SK-N-SH (cell line): ENCODE measurements at regions of chr7 and their contacts with region 1.

Region 1: GRCh38 chr7:38215735-38216670 is 38.0 kb downstream of the STARD3NL start:
- DNase-seq: peak; percentile 77
- H3K4me3 ChIP-seq: no peak overlapping the region
- H3K27ac ChIP-seq: peak overlapping the region; percentile 6 to 31; a peak in 2 of 4 replicates
- H3K4me1 ChIP-seq: peaks cover 9 to 18% of the 10 kb centered on the region in 2 experiments; a peak in 3 of 4 replicates
- H3K27me3 ChIP-seq: no peaks in the 10 kb centered on the region
- CTCF ChIP-seq: peak; percentile 100
- EP300 ChIP-seq: no peak; a peak in 1 of 4 replicates
- RAD21 ChIP-seq: peak; percentile 86

Region 2: GRCh38 chr7:37916673-37917660 is 299.0 kb before region 1 on chr7 and contains the start of gene SFRP4:
- CTCF ChIA-PET with region 1: interaction called, 42 read pairs
- POLR2A ChIA-PET with region 1: no interaction called
- DNase-seq: peak; percentile 77
- H3K4me3 ChIP-seq: peak within 1 kb of the TSS; percentile 51 to 54
- H3K27ac ChIP-seq: no peak within 1 kb of the TSS
- H3K4me1 ChIP-seq: peaks cover 0 to 26% of the 10 kb centered on the region in 2 experiments; a peak in 2 of 4 replicates
- H3K27me3 ChIP-seq: peaks cover 39% of the 10 kb centered on the region; the same call in 1 of the 2 replicates
- CTCF ChIP-seq: peak; percentile 82
- EP300 ChIP-seq: no peak
- RAD21 ChIP-seq: peak; percentile 69
- polyA plus RNA-seq, gene SFRP4: 0.03 TPM in 1 of 2 replicates, not detected in the other

Region 3: DNA sequence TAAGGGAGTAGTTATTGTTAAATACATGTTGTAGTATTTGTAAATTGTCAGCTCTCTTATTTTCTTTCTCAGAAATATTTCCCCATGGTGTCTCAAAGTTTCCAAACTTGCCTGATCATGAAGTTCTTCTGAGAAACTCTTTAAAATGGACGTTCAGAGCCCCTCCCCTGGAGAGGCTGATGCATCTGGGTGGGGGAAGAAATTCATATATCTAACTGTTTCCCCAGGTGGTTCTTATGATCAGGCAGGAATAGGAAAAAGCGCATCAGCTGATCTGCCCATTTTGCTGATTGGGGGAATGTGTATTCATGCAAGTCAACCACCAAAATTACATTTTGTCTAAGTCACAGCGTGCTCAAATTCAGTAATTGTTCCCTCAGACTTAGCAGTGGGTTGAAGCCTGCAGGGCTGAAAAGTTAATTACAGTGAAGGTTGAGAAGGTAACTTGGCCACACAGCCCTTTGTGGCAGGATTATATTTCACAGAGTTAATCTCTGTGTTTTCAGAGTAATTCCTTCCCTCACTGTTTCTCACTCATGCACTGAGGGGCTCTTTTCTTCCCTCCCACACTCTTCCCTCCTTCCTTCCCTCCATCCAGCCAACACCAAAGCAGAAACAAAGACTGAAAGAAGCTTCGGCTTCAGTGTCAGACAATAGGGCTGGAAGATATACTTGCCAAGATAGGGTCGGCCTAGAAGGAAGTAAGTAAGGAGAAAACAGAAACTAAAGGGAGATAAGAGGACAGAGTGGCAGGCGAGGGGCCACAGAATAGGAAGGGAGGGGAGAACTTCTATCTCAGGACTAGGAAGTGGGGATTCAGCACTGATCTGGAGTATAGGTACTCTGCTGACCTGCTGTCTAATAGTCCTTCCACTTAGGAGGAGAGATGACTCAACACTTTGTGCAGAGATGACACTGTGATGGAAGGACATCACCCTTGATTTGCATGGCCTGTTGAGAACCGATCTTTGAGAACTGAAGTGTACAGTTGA is 88.5 kb before region 1 on chr7:
- CTCF ChIA-PET with region 1: interaction called, 11 read pairs
- POLR2A ChIA-PET with region 1: no interaction called
- DNase-seq: no peak
- H3K4me3 ChIP-seq: no peak overlapping the region
- H3K27ac ChIP-seq: no peak overlapping the region
- H3K4me1 ChIP-seq: no peaks in the 10 kb centered on the region
- H3K27me3 ChIP-seq: no peaks in the 10 kb centered on the region; the same call in 1 of the 2 replicates
- CTCF ChIP-seq: no peak
- EP300 ChIP-seq: no peak
- RAD21 ChIP-seq: no peak

Region 4: GRCh38 chr7:38195804-38196595 is 20.0 kb before region 1 on chr7:
- CTCF ChIA-PET with region 1: interaction called, 98 read pairs
- POLR2A ChIA-PET with region 1: no interaction called
- DNase-seq: no peak
- H3K4me3 ChIP-seq: no peak overlapping the region
- H3K27ac ChIP-seq: peak overlapping the region in 1 of 2 experiments; percentile 45; a peak in 2 of 4 replicates
- H3K4me1 ChIP-seq: peaks cover 22 to 40% of the 10 kb centered on the region in 2 experiments; a peak in 3 of 4 replicates
- H3K27me3 ChIP-seq: no peaks in the 10 kb centered on the region
- CTCF ChIP-seq: no peak
- EP300 ChIP-seq: no peak
- RAD21 ChIP-seq: no peak

Region 5: DNA sequence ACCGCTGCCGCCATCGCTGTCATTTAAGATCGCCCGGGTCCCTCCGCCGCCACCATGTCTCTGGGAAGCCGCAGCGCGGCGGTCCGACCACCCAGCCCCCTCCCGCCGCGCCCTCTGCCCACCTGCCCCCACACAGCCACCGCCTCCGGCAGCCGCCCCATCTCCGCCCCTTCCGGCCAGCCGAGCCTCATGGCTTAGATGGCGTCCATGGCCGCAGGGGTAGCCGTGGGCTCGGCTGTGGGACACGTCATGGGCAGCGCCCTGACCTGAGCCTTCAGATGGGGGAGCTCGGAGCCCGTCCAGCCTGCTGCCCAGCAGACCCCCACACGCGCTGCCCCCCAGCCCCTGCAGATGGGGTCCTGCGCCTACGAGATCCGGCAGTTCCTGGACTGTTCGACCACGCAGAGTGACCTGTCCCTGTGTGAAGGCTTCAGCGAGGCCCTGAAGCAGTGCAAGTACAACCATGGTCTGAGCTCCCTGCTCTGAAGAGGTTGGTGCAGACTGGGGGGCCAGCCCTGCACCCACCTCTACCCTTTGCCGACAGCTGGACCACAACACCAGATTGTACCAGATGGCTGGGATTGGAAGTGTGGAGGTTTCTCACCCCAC is 95.4 kb after region 1 on chr7:
- CTCF ChIA-PET with region 1: interaction called, 59 read pairs
- POLR2A ChIA-PET with region 1: no interaction called
- DNase-seq: peak; percentile 65
- H3K4me3 ChIP-seq: no peak overlapping the region
- H3K27ac ChIP-seq: no peak overlapping the region
- H3K4me1 ChIP-seq: peaks cover 0 to 11% of the 10 kb centered on the region in 2 experiments; a peak in 3 of 4 replicates
- H3K27me3 ChIP-seq: no peaks in the 10 kb centered on the region; the same call in 1 of the 2 replicates
- CTCF ChIP-seq: no peak
- EP300 ChIP-seq: no peak
- RAD21 ChIP-seq: no peak

Region 6: DNA sequence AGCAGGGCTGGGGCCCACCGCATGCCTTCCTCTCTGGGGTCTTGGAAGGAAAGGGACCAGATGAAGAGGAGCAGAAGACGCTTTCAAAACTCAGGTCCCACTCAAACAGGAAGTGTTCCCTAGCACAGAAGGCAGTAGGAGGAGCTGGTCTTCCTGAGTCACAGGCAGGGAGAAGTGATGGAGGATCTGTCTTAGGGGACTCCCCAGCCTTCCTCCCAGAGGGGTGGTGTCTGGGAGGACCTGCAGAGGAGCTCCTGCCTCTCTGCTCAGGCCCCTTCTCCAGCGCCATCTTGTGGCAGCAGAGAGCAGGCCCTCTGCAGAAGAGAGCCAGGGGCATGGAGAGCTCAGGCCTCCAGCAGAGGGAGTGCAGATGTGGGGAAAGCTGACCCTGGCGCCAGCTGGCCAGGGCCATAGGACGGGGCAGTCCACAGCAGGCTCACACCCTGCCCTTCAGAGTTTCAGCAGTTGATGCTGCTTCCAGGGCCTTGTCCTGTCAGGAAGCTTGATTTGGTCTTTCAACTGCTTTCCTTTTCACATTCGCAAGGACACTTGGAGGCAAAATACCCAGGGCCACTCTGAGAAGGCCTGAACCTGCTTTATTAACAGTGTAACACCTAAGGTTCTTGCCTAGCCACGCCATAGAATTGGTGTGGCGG is 119.6 kb after region 1 on chr7:
- CTCF ChIA-PET with region 1: interaction called, 58 read pairs
- POLR2A ChIA-PET with region 1: no interaction called
- DNase-seq: peak; percentile 79
- H3K4me3 ChIP-seq: peak overlapping the region in 1 of 2 experiments; percentile 25; a peak in 1 of 4 replicates
- H3K27ac ChIP-seq: no peak overlapping the region
- H3K4me1 ChIP-seq: peaks cover 0 to 2% of the 10 kb centered on the region in 2 experiments; a peak in 1 of 4 replicates
- H3K27me3 ChIP-seq: no peaks in the 10 kb centered on the region
- CTCF ChIP-seq: peak; percentile 94
- EP300 ChIP-seq: no peak
- RAD21 ChIP-seq: peak; percentile 72

Region 7: DNA sequence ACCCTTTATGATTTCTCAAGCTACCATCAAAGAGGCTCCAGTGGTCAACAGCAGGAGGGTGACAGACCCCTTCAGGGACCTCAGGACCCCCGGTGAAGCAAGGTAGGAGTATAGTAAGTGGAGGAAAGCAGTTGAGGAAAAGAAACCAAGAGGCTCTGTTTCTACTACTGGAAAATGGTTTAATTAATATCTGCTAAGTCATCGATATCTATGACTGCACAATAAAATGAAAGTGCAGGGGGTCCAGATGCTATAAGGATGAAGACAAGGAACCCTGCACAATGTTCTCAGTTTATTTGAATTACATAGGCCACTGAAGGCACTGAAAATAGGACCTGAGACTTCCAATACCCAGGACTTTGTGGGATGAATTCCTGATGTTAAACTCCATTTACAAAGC is 391.5 kb after region 1 on chr7:
- CTCF ChIA-PET with region 1: no interaction called
- POLR2A ChIA-PET with region 1: no interaction called
- DNase-seq: no peak
- H3K4me3 ChIP-seq: no peak overlapping the region
- H3K27ac ChIP-seq: no peak overlapping the region
- H3K4me1 ChIP-seq: no peaks in the 10 kb centered on the region
- H3K27me3 ChIP-seq: 0 out of 2 replicates have a peak, but pooled peaks cover 6% of the 10 kb centered on the region
- CTCF ChIP-seq: no peak
- EP300 ChIP-seq: no peak
- RAD21 ChIP-seq: no peak

Region 8: GRCh38 chr7:38673795-38674194 is 457.8 kb after region 1 on chr7:
- CTCF ChIA-PET with region 1: no interaction called
- POLR2A ChIA-PET with region 1: no interaction called
- DNase-seq: no peak
- H3K4me3 ChIP-seq: no peak overlapping the region
- H3K27ac ChIP-seq: no peak overlapping the region
- H3K4me1 ChIP-seq: no peaks in the 10 kb centered on the region
- H3K27me3 ChIP-seq: peaks cover 6% of the 10 kb centered on the region; the same call in 1 of the 2 replicates
- CTCF ChIP-seq: no peak
- EP300 ChIP-seq: no peak
- RAD21 ChIP-seq: no peak